Activated CD8-positive, alpha-beta T cell treated with anti-CD3 and anti-CD28 coated beads, Interleukin-2, amount 10 ng/mL, durations not matched to agents 7 days and 5 days (primary cell): ENCODE measurements at regions of chr3 and their contacts with region 1.

Region 1: GRCh38 chr3:120558771-120559241 is 37.3 kb upstream of the NDUFB4 start:
- DNase-seq: peak; percentile 92
- ATAC-seq: peak; percentile 93
- H3K4me3 Mint-ChIP-seq: peak overlapping the region; percentile 76
- H3K27ac Mint-ChIP-seq: peak overlapping the region; percentile 45
- H3K4me1 Mint-ChIP-seq: peaks cover 11% of the 10 kb centered on the region
- H3K27me3 Mint-ChIP-seq: peaks cover 3% of the 10 kb centered on the region

Region 2: GRCh38 chr3:120245386-120245785 is 313.4 kb before region 1 on chr3:
- CTCF ChIA-PET with region 1: interaction called, 25 read pairs
- POLR2A ChIA-PET with region 1: interaction called, 3 read pairs
- DNase-seq: no peak
- ATAC-seq: no peak
- H3K4me3 Mint-ChIP-seq: no peak overlapping the region
- H3K27ac Mint-ChIP-seq: no peak overlapping the region
- H3K4me1 Mint-ChIP-seq: no peaks in the 10 kb centered on the region
- H3K27me3 Mint-ChIP-seq: peaks cover 14% of the 10 kb centered on the region

Region 3: DNA sequence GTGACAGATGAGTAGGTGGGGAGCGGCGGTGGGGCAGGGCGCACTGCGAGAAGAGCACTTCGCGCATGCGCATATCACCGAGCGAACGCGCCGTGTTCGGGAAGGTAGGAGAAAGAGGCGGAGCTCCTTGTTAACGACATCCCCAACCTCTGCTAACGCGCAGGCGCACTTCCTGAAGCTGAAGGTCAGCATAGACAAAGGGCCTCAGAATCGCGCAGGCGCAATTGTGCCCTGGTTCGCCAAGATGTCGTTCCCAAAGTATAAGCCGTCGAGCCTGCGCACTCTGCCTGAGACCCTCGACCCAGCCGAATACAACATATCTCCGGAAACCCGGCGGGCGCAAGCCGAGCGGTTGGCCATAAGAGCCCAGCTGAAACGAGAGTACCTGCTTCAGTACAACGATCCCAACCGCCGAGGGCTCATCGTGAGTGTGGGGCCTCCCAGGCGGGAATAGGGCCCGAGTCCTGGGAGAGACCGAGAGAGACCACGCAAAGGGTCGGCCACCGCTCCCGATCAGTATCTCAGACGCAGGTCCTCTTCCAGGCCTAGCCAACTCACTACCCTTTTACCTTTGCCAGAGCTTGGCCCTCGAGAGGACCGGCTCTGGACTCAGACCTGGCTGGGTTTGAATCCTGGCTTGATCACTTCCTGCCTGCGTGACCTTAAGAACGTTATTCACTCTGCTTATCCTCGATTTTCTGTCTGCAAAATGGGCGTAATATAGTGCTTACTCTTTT is 37.5 kb after region 1 on chr3 and contains the start of gene NDUFB4:
- CTCF ChIA-PET with region 1: interaction called, 31 read pairs
- POLR2A ChIA-PET with region 1: no interaction called
- DNase-seq: peak; percentile 97
- ATAC-seq: peak; percentile 99
- H3K4me3 Mint-ChIP-seq: peak within 1 kb of the TSS; percentile 87
- H3K27ac Mint-ChIP-seq: peak within 1 kb of the TSS; percentile 94
- H3K4me1 Mint-ChIP-seq: peaks cover 8% of the 10 kb centered on the region
- H3K27me3 Mint-ChIP-seq: peaks cover 3% of the 10 kb centered on the region
- total RNA-seq, gene NDUFB4: 119 to 124 TPM

Region 4: GRCh38 chr3:120601554-120601953 is 42.7 kb after region 1 on chr3:
- CTCF ChIA-PET with region 1: interaction called, 31 read pairs
- POLR2A ChIA-PET with region 1: no interaction called
- DNase-seq: no peak
- ATAC-seq: no peak
- H3K4me3 Mint-ChIP-seq: no peak overlapping the region
- H3K27ac Mint-ChIP-seq: no peak overlapping the region
- H3K4me1 Mint-ChIP-seq: no peaks in the 10 kb centered on the region
- H3K27me3 Mint-ChIP-seq: no peaks in the 10 kb centered on the region